Activated CD4-positive, alpha-beta memory T cell treated with anti-CD3 and anti-CD28 coated beads, Interleukin-2, amount 10 ng/mL, durations not matched to agents 7 days and 5 days (primary cell): ENCODE measurements at regions of chr1 and their contacts with region 1.

Region 1: DNA sequence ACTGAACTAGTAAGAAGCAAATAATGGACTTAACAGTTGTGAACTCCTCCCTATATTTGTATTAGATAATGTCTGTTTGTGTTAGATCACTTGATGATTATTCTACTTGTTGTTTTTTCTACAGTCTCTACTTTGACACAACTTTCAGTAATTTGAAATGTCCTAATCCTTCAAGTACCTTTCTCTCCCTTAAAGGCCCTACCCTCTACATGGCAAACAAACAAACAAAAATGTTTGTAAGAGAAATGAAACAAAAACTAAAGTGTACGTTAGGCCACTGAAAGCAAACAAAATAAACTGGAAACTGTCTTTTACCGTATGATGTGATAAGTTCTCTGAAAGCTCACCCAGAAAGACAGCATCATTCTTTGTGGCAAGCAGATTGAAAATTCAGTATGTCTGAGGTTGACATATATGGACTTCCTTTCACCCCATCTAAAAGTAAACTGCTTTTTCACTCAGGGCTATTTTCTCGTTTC is 255.9 kb upstream of the SNX7 start:
- DNase-seq: no peak
- H3K4me3 Mint-ChIP-seq: peak overlapping the region; percentile 60
- H3K27ac Mint-ChIP-seq: peak overlapping the region; percentile 93
- H3K4me1 Mint-ChIP-seq: peaks cover 49% of the 10 kb centered on the region
- H3K27me3 Mint-ChIP-seq: no peaks in the 10 kb centered on the region

Region 2: GRCh38 chr1:98388441-98388840 is 17.2 kb before region 1 on chr1:
- CTCF ChIA-PET with region 1: interaction called, 8 read pairs
- POLR2A ChIA-PET with region 1: interaction called, 10 read pairs
- DNase-seq: peak; percentile 62
- H3K4me3 Mint-ChIP-seq: peak overlapping the region; percentile 2
- H3K27ac Mint-ChIP-seq: peak overlapping the region; percentile 84
- H3K4me1 Mint-ChIP-seq: peaks cover 33% of the 10 kb centered on the region
- H3K27me3 Mint-ChIP-seq: no peaks in the 10 kb centered on the region